ENCODE measurements at regions of chr5 and their contacts with region 1.

Region 1: GRCh38 chr5:142324871-142325724 is at the start of gene SPRY4:
- DNase-seq: peak; percentile 94
- H3K4me3 Mint-ChIP-seq: peak within 1 kb of the TSS; percentile 78
- H3K27ac Mint-ChIP-seq: no peak within 1 kb of the TSS
- H3K4me1 Mint-ChIP-seq: peaks cover 26% of the 10 kb centered on the region
- H3K27me3 Mint-ChIP-seq: peaks cover 48% of the 10 kb centered on the region
- total RNA-seq, gene SPRY4: 1.1 to 1.2 TPM

Region 2: DNA sequence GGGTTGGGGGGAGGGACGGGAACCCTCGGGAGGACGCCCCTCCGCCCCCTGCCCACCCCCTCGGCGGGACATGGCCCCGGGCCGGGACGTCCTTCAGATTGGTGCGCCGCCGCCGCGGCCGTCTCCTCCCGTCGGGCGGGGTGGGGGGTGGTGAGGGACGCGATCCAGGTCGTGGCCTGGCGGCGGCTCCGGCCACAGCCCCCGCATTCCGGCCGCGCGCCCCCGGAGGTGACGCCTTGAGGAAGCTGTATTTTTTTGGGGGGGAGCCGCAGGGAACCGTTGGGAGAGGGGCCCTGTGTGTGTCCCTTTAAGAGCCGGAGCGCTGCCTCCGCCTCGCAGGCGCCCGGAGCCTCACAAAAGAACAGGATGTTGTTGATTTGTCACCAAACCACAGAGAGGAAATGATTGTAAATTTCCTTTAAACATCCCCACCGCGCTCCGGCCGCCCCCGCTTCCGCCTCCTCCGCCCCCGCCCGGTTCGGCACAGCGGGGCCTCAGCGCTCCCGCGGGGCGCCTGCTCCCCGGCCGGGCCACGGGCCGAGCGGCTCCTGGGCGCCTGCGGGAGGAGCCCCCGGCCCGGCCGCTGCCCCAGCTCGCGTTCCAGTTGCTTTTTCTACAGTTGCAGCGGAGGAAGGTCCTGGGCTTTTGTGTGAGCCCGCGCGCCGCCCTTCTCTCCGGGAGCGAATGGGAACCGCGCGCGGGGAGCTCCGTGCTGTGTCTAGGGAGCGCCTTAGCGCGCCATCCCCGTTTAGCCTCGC is 31.8 kb after region 1 on chr5:
- CTCF ChIA-PET with region 1: interaction called, 11 read pairs
- POLR2A ChIA-PET with region 1: interaction called, 4 read pairs
- intact Hi-C with region 1: loop called (anchors 1 kb)
- DNase-seq: peak; percentile 95
- H3K4me3 Mint-ChIP-seq: peak overlapping the region; percentile 71
- H3K27ac Mint-ChIP-seq: peak overlapping the region; percentile 91
- H3K4me1 Mint-ChIP-seq: peaks cover 38% of the 10 kb centered on the region
- H3K27me3 Mint-ChIP-seq: no peaks in the 10 kb centered on the region

Measured in activated CD4-positive, alpha-beta memory T cell treated with anti-CD3 and anti-CD28 coated beads for 36 hours (primary cell).